HEK293T (cell line): ENCODE measurements at regions of chr6 and their contacts with region 1.

Region 1: DNA sequence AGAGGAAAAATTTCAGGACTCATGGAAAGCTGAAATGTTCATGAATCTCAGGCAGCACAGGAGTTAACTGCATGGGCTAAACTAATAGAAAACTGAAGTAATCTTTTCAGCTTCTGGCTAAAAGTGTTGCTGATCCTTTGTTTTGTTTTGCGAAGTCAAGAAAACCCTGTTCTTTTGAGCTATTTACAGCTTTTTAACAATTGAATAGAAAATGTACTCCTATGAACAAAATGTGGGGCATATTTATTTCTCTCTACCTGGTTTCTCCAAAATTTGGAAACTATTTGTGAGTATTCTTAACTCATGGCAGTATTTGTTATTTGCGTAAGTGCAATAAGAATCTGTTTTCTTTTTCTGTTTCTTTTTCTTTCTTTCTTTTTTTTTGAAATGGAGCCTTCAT is 818.8 kb upstream of the CITED2 start:
- DNase-seq: no peak

Region 2: GRCh38 chr6:139474145-139475108 is 718.8 kb before region 1 on chr6:
- CTCF ChIA-PET with region 1: interaction called, 10 read pairs
- POLR2A ChIA-PET with region 1: no interaction called
- DNase-seq: peak; percentile 29

Region 3: DNA sequence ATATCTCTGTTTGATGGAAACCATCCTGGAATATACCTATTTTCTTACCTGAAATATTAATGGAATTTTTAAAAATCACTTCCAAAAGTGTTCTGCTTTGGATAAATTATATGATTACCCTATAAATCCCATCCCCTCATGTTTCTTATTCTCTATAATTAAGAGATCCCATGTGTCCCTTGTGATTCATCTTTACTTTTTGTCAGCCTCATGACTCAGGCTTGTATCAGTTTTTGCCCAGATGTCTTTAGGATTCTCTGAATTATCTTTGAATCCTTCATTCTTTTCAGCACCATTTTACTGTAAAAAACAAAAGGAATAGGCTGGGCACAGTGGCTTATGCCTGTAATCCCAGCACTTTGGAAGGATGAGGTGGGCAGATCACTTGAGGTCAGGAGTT is 14.3 kb before region 1 on chr6:
- CTCF ChIA-PET with region 1: no interaction called
- POLR2A ChIA-PET with region 1: no interaction called
- DNase-seq: no peak